Psoas muscle (tissue), 8 donors: ENCODE measurements at regions of chr11 and their contacts with region 1.

Region 1: GRCh38 chr11:9259981-9260837 is 4.9 kb downstream of the DENND5A start:
- DNase-seq: no peak
- ATAC-seq: no peak
- H3K4me3 ChIP-seq: no peak overlapping the region
- H3K27ac ChIP-seq: no peak overlapping the region
- H3K4me1 ChIP-seq: peaks cover 18% of the 10 kb centered on the region
- H3K27me3 ChIP-seq: no peaks in the 10 kb centered on the region
- CTCF ChIP-seq: peak; percentile 7

Region 2: GRCh38 chr11:9219572-9219971 is 40.6 kb before region 1 on chr11:
- intact Hi-C with region 1: loop called in 1 of 2 experiments (anchors 5 kb)
- DNase-seq: no peak
- ATAC-seq: peak; percentile 40 to 81 (median 71)
- H3K4me3 ChIP-seq: no peak overlapping the region
- H3K27ac ChIP-seq: peak overlapping the region; percentile 18
- H3K4me1 ChIP-seq: peaks cover 16% of the 10 kb centered on the region
- H3K27me3 ChIP-seq: no peaks in the 10 kb centered on the region
- CTCF ChIP-seq: no peak

Region 3: DNA sequence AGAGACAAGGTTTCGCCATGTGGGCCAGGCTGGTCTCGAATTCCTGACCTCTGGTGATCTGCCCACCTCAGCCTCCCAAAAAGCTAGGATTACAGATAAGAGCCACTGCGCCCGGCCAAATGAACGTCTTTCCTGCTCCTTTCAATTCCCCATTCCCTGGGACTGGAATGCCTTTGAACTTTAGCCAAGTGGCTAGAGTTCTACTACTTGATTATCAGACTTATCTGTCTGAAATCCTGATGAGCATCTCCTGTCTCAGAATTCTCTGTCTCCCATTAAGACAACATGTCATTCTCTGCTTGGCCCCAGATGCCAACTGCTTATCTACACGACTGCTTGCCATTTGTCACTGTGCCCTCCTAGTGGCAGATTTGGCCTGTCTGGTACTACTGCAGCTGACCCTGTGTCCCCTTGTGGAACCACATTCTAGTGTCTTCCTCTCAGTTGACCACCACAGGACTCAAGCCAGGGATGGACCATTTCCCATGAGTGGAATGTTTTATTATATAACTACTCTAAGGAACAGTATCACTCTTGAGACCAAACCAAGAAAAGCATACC is 91.2 kb after region 1 on chr11:
- intact Hi-C with region 1: no loop called
- DNase-seq: no peak
- ATAC-seq: no peak
- H3K4me3 ChIP-seq: no peak overlapping the region
- H3K27ac ChIP-seq: no peak overlapping the region
- H3K4me1 ChIP-seq: no peaks in the 10 kb centered on the region
- H3K27me3 ChIP-seq: peaks cover 0 to 6% (median 0%) of the 10 kb centered on the region in 3 donors
- CTCF ChIP-seq: no peak